ENCODE measurements at regions of chr21 and their contacts with region 1.

Region 1: DNA sequence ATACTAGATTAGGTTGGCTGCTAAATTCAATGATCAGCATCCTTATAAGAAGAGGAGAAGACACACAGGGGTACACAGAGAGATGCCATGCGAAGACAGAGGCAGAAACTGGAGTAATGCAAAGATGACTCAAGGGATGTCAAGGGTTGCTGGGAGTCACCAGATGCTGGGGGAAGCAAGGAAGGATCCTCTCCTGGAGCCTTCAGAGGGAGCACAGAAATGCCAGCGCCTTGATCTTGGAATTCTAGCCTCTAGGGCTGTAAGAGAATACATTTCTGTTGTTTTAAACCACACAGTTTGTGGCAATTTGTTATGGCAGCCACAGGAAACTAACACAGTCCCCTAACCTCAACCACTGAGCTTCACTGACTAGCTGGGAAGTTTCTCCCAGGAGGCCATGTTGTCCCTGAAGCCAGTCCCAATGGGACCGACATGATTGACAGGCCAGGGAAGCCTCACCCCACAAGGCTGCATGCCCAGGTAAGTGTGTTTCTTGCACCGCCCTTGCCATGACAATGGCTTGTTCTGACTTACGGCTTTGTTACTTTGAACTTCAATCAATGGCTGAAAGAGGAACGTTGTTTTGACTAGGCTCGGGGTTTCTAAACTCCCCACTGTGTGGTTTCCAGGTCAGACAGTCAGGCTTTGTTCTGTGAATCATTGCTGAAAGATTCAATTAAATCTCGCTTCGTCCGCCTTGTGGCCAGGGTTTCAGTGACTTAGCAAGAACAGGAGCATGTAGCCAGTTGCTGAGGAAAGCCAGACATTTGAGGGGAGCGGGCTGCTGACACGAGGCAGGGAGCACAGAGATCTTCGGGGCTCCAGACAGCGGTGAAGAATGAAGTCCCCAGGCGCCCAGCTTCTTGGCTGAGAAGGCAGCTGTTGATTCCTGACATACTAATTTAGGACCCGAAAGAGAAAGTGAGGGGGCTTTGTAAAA is 62.3 kb downstream of the RUNX1 start:
- DNase-seq: peak; percentile 94
- ATAC-seq: peak; percentile 46
- H3K4me3 Mint-ChIP-seq: peak overlapping the region; percentile 72
- H3K27ac Mint-ChIP-seq: peak overlapping the region; percentile 92
- H3K4me1 Mint-ChIP-seq: peaks cover 91% of the 10 kb centered on the region
- H3K27me3 Mint-ChIP-seq: no peaks in the 10 kb centered on the region
- CTCF ChIP-seq: no peak

Region 2: GRCh38 chr21:34946916-34947534 is 39.8 kb before region 1 on chr21:
- CTCF ChIA-PET with region 1: interaction called, 13 read pairs
- POLR2A ChIA-PET with region 1: interaction called, 6 read pairs
- intact Hi-C with region 1: no loop called
- DNase-seq: no peak
- ATAC-seq: peak; percentile 67
- H3K4me3 Mint-ChIP-seq: no peak overlapping the region
- H3K27ac Mint-ChIP-seq: peak overlapping the region; percentile 95
- H3K4me1 Mint-ChIP-seq: peaks cover 86% of the 10 kb centered on the region
- H3K27me3 Mint-ChIP-seq: no peaks in the 10 kb centered on the region
- CTCF ChIP-seq: peak; percentile 42

Region 3: DNA sequence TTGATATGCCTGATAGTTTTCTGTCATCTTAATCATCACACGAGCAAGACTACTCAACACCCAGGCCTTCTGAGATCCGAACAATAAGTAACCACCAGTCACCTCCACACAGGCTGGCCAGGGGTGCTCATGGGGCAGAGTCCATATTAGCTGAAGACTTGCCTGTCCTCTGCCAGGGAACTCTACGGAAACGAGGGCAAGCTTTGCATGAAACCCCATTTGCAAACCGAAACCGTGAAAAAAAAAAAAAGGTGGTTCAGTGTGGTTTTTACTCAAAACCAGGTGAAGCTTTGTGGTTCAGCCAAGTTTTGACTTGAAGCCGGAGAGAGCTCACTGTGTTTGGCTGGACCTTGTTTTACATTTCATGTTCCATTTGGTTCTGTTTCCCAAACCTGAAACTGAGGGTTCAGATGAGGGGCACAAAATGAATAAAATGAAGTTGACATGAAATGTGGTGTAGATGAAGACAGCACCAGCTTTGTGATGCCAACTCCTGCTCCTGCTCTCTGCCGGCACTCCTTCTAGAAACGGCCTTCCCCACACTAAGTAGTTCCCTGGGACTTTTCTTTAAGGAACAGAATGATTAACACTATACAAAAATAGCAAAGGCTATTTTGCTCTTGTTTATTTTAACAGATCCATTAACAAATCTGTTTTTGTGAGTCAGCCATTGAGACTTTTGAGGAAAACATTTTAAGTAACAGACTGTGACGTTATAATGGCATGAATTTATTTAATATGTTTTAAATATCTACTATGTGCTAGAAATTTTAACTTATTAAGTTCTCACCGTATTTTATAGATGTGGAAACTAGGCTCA is 12.5 kb before region 1 on chr21:
- CTCF ChIA-PET with region 1: interaction called, 22 read pairs
- POLR2A ChIA-PET with region 1: interaction called, 54 read pairs
- intact Hi-C with region 1: loop called (anchors 2 kb)
- DNase-seq: peak; percentile 69
- ATAC-seq: peak; percentile 92
- H3K4me3 Mint-ChIP-seq: peak overlapping the region; percentile 52
- H3K27ac Mint-ChIP-seq: peak overlapping the region; percentile 61
- H3K4me1 Mint-ChIP-seq: peaks cover 79% of the 10 kb centered on the region
- H3K27me3 Mint-ChIP-seq: peaks cover 3% of the 10 kb centered on the region
- CTCF ChIP-seq: no peak

Region 4: DNA sequence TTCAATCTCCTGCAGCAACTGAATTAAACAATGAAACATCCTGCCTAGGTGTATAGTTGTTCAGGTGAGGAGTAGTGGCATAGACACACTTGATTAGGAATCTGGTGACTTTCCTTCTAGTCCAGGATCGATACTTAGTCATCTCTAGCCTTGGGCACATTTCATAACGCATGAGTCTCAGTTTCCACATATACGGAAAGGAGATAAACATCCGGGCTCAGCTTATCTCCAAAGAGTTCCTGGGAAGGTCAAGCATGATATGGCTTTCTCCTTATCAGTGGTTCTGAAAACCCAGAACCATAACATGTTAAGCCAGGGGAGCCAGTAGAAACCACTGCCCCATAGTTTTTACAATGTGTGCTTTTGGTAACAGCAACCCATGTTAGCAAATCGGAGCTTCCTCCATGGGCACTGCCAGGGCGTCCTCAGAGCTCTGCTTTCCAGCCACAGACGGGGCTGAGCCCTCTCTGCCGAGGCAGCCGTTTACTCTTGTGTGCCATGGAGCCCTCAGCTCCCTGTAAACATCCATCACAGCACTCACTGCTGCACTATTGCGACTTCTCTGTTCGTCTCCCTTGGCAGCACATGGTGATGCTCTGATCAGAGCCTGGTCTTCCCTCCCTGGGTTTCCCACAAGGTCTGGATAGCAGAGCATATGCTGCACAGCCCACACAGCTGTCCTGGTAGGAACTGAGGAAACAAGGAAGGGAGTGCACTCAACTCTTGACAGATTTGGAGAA is 27.6 kb after region 1 on chr21:
- CTCF ChIA-PET with region 1: interaction called, 7 read pairs
- POLR2A ChIA-PET with region 1: interaction called, 17 read pairs
- intact Hi-C with region 1: no loop called
- DNase-seq: no peak
- ATAC-seq: no peak
- H3K4me3 Mint-ChIP-seq: no peak overlapping the region
- H3K27ac Mint-ChIP-seq: peak overlapping the region; percentile 58
- H3K4me1 Mint-ChIP-seq: peaks cover 83% of the 10 kb centered on the region
- H3K27me3 Mint-ChIP-seq: no peaks in the 10 kb centered on the region
- CTCF ChIP-seq: no peak

Region 5: DNA sequence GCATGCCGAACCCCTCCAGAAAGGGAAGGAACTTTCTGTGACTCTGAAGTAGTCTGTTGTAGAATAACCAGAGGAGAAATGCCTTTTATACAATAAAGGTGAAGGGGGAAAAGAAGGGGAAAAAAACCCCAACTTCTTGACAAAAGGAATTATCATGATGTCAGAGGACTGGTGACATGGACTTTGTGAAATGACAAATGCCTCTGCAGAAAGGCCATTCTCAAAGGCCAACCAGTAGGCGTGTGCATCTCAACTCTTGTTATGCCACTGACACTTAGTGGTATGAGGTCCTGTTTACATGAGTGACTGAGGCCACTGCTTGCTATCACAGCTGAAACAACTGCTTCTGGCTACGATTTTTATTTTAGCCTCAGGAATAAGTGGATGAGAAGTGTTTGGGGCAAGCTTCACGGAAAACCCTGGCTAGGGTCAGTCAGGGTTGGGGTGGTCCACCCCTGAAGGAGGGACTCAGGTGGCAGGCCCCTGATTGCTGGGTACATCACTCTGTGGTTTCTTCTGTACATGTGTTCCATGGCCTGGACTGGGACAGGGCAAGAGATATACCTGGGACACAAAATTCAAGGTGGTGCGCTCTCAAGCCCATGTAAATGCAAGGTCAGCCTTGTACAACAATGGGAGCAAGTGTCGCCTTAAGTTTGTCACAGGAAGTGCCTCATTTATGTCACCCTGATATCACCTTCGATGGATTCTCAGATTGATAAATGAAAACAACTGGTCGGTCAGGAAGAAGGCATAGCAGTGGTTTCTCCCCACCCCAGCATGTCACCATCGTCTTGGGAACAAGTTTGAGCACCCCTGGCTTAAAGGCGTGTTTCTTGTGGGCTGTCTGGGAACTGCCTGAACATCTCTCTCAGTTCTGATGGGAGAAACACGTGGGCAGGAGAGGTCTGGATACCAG is 49.9 kb after region 1 on chr21:
- CTCF ChIA-PET with region 1: interaction called, 5 read pairs
- POLR2A ChIA-PET with region 1: interaction called, 14 read pairs
- intact Hi-C with region 1: no loop called
- DNase-seq: peak; percentile 66
- ATAC-seq: peak; percentile 50
- H3K4me3 Mint-ChIP-seq: peak overlapping the region; percentile 63
- H3K27ac Mint-ChIP-seq: peak overlapping the region; percentile 90
- H3K4me1 Mint-ChIP-seq: peaks cover 96% of the 10 kb centered on the region
- H3K27me3 Mint-ChIP-seq: no peaks in the 10 kb centered on the region
- CTCF ChIP-seq: no peak

Region 6: DNA sequence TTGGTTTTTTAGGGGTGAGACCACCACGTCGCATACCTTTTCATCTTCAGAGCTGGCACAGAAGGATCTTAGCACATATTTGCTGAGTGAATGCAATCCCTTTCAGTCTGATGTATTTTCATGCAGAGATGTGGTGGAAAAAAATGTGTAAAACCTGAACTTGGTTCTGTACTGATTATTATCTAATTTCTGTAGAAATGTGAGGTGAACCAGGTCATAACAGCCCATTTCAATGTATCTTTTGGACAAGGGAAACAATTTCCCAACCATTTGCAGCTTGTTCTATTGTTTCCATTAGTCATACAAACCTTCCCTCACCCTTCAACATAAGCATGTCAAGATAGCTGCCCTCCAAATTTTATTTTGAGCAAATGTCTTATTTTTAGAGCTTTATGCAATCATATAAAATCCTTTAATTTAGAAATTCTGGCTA is 109.0 kb after region 1 on chr21:
- CTCF ChIA-PET with region 1: no interaction called
- POLR2A ChIA-PET with region 1: interaction called, 5 read pairs
- intact Hi-C with region 1: loop called (anchors 5 kb)
- DNase-seq: peak; percentile 17
- ATAC-seq: peak; percentile 41
- H3K4me3 Mint-ChIP-seq: no peak overlapping the region
- H3K27ac Mint-ChIP-seq: peak overlapping the region; percentile 74
- H3K4me1 Mint-ChIP-seq: peaks cover 25% of the 10 kb centered on the region
- H3K27me3 Mint-ChIP-seq: peaks cover 2% of the 10 kb centered on the region
- CTCF ChIP-seq: no peak

Measured in activated CD8-positive, alpha-beta T cell treated with anti-CD3 and anti-CD28 coated beads for 36 hours (primary cell).